PC-9 (cell line): ENCODE measurements at regions of chr9 and their contacts with region 1.

Region 1: DNA sequence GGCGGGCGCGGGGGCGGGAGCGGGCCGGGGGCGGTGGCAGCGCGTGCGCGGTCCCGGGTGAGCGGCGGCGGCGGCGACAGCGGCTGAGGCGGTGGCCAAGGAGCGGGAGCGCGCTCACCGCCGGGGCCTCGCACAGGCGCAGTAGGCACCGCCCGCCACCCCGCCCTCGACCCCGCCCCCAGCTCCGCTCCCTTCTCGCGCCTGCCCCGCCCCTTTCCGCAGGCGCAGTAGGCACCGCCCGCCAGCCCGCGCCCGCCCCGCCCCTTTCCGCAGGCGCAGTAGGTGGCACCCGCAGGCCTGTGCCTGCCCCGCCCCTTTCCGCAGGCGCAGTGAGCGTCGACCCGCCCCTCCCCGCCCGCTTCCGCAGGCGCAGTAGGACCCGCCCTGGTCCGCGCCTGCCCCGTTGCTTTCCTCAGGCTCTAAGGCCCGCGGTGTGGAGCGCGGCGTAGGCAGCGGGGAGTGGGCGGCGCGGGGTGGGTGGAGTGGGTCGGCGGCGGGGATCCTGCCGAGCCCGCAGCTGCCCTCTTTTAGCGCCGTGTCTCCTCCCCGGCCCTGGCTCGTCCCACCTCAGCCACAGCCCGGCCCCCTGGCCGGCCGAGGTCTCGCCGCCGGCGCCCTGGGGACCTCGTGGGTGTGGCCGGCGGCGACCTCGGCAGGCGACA is at the start of gene CAMSAP1:
- DNase-seq: peak; percentile 42 to 85
- H3K4me3 ChIP-seq: peak within 1 kb of the TSS; percentile 52; the same call in 1 of the 2 replicates
- H3K27ac ChIP-seq: peak within 1 kb of the TSS; percentile 93
- H3K4me1 ChIP-seq: 0 out of 2 replicates have a peak, but pooled peaks cover 6% of the 10 kb centered on the region
- H3K27me3 ChIP-seq: no peaks in the 10 kb centered on the region
- CTCF ChIP-seq: no peak
- total RNA-seq, gene CAMSAP1: 16.7 and 17.3 TPM in 2 replicates

Region 2: DNA sequence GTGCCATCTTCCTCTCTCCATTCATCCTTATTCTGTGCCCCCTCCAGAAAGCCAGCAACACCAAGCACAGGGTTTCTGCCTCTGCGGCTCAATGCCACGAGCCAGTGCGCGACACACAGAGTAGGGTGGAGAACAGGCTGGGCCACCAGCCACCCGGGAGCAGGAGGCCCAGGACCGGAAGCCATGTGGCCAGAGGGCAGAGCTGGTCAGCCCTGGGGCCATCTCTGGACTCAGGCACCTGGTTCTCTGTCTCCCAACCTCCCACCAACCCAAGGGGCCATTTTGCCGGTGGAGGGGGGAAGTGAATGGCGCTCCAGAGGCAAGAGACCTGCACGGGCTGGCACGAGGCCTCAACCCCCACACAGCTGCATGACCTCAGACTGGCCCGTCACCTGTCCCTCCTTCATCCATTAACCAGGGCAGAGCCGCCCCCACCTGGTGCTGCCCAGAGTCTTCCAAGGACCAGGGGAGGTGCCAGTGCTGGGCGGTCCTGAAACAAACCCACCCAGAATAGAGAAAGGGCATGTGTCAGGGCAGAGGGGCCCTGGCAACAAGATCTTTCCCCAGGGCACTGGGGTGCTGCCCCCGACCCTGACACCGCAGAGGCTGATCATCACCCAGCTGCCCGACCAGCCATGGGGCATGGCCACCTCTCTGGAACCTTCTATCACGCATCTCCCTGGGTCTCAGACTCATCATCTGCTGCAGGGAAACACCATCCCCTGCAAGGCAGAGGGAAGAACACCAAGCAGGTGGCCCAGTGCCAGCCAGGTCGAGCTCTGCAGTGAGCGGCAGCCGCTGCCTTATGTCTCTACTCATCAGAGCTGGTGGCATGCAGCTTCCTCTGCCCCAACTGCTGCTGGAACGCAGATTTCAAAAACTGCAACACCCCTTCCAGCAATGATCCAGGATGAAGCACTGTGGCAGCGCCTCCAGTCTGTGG is 1927.4 kb before region 1 on chr9:
- CTCF ChIA-PET with region 1: no interaction called
- POLR2A ChIA-PET with region 1: no interaction called
- intact Hi-C with region 1: no loop called
- DNase-seq: peak in 1 of 2 experiments; percentile 37
- H3K4me3 ChIP-seq: no peak overlapping the region
- H3K27ac ChIP-seq: no peak overlapping the region
- H3K4me1 ChIP-seq: no peaks in the 10 kb centered on the region
- H3K27me3 ChIP-seq: no peaks in the 10 kb centered on the region
- CTCF ChIP-seq: no peak

Region 3: DNA sequence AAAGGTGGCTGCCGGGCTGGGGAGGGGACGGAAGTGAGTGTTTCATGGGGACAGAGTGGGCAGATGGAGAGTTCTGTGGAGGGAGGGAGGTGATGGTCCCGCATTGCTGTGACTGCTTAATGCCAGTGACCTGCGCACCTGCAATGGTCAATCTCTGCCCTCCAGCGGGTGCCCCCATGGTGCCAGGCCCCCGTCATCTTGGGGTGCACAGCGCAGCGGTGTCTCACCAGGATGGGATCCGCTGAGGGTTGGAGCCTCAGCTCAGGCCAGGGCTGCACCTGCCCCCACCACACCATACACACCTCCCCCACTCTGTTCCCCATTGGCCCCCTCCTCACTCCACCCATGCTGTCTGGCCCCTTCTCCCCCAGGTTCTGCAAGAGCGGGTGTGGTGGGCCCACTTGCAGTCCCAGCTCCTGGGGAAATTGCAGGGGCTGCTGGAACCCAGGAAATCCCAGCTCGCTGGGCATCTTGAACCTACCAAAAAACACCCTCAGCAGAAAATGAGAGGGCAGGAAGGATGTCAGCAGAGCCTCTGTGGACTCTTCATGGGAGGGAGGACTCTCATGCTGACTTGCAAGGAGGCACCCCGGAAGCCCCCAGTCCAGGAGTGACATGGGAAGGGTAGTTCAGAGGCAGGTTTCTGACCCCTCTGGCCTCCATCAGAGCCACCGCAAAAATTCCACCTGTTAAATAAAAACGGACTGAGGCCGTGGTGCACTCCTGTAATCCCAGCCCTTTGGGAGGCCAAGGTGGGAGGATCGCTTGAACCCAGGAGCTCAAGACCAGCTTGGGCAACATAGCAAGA is 12.0 kb after region 1 on chr9:
- CTCF ChIA-PET with region 1: no interaction called
- POLR2A ChIA-PET with region 1: interaction called, 27 read pairs
- intact Hi-C with region 1: no loop called
- DNase-seq: no peak
- H3K4me3 ChIP-seq: no peak overlapping the region
- H3K27ac ChIP-seq: no peak overlapping the region
- H3K4me1 ChIP-seq: no peaks in the 10 kb centered on the region
- H3K27me3 ChIP-seq: no peaks in the 10 kb centered on the region
- CTCF ChIP-seq: no peak

Region 4: DNA sequence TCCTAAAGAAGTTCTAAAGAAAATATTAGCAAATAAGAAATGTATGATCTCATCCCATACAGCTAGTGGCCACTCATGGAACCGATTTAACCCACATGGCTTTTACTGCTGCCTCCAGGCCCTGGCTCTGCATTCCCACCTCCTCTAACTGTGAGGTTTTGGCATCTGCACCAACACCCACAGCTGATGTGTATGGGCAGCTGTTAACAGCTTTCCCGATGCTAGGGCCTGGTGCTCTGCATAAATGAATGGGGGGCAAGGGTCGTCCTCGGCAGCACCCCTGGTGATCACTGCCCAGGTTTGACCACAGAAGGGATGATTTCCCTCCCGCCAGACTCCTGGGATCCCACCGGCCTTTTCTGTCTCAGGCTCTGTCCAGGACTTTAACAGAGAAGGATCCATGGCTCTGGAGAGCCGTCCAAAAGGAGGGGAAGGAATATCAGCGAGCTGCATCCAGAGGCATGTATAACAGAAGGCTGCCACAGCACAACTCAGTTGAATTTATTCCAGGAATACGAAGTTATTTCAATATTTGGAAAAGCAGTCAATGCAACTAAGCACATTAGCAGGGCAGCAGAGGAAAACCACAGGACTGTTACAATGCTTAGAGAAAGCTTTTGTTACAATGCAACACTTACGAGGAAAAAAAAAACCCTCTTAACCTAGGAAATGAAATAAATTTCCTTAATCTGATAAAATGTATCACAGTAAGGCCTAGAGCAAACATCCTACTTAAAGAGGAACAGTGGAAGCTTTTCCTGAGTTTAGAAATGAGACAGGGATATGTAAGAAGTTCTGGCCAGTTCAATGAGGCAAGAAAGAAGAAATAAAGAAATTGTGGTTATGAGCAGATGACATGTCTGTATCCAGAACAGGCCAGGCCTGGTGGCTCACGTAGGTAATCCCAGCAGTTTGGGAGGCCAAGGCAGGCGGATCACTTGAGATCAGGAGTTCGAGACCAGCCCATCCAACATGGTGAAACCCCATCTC is 124.5 kb after region 1 on chr9:
- CTCF ChIA-PET with region 1: no interaction called
- POLR2A ChIA-PET with region 1: no interaction called
- intact Hi-C with region 1: no loop called
- DNase-seq: peak in 1 of 2 experiments; percentile 4
- H3K4me3 ChIP-seq: no peak overlapping the region
- H3K27ac ChIP-seq: no peak overlapping the region
- H3K4me1 ChIP-seq: no peaks in the 10 kb centered on the region
- H3K27me3 ChIP-seq: no peaks in the 10 kb centered on the region
- CTCF ChIP-seq: no peak